Dorsolateral prefrontal cortex (tissue), 120 donors: ENCODE measurements at regions of chr2 and their contacts with region 1.

Region 1: DNA sequence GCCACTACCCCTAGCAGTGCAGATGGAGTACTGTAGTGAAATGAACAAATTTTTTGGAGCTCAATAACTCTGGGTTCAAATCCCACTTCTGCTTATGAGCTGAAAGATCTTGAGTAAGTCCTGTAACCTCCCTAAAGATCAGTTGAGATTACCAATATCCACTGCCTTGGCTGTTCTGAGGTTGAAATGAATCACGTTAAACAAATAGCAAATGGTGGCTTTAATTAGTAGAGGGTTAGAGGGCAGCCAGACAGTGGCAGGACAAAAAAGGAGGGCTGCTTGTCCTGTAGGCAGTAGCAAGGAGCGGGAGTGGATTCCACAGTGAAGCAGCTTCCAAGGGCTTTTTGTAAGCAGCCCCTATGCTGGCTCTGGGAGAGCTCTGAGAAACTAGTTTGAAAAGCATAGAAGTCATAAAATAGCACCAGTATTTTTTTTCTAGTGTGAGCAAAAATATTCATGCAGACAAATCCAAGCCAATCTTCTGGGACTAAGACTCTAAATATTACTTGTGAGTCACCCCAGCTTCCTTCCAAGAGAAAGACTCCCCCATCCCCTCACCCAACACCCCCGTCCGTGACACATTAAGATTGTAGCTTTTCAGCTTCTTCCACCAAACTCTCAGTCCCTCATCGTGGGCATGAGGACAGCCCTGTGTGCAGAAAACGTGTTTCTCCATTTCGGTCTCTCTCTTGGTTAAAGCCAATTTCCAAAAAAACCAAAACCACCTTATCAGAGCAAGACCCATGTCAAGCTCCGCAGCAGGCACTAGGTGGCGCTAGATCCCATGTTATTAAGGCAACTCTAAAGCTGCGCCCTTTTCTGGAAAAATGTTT is 123.5 kb upstream of the LGALSL start:
- DNase-seq: peak; percentile 66 to 91 (median 80)
- H3K4me3 ChIP-seq: peak overlapping the region in 30 of 59 donors; percentile 6 to 48 (median 24)
- H3K27ac ChIP-seq: peak overlapping the region in 52 of 59 donors; percentile 2 to 82 (median 63)
- H3K27me3 ChIP-seq: no peaks in the 10 kb centered on the region
- CTCF ChIP-seq: peak; percentile 81 to 98 (median 94)

Region 2: DNA sequence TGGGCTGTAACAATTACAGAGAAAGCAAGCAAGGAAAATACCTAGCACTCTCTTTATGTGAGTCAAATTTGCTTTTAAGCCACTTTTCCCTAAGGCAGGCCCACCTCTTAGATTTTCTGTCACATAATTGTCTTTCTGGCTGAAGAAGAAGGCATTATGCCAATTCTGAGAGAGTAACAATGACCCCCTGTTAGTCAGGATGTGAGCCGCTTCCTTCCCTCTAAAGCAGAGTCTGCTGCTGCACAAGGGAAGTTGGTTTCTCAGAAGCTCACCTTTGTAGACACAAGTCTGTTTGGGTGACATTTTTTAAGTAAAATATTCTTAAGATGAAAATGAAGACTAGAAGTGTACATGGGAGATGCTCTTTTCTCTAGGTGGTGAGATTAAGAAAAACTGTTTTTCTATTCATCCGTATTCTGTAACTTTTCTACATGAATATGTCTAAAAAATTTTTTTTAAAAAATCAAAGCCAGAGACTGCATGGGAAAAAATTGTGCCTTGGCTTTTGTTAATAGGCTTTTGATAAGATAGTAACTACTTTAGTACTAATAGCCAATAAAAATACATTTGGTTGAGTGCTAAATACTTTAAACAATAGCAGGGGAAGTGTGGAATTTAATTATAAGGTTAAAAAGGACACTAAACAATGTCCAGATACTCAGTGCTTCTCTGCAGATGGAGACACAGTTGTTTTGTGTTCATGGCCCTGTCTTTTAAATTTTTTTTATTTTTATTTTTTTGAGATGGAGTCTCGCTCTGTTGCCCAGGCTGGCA is 277.8 kb before region 1 on chr2:
- intact Hi-C with region 1: loop called (anchors 1 to 2 kb)
- DNase-seq: no peak
- H3K4me3 ChIP-seq: no peak overlapping the region
- H3K27ac ChIP-seq: peak overlapping the region in 8 of 59 donors; percentile 5 to 47 (median 19)
- H3K27me3 ChIP-seq: no peaks in the 10 kb centered on the region
- CTCF ChIP-seq: no peak

Region 3: DNA sequence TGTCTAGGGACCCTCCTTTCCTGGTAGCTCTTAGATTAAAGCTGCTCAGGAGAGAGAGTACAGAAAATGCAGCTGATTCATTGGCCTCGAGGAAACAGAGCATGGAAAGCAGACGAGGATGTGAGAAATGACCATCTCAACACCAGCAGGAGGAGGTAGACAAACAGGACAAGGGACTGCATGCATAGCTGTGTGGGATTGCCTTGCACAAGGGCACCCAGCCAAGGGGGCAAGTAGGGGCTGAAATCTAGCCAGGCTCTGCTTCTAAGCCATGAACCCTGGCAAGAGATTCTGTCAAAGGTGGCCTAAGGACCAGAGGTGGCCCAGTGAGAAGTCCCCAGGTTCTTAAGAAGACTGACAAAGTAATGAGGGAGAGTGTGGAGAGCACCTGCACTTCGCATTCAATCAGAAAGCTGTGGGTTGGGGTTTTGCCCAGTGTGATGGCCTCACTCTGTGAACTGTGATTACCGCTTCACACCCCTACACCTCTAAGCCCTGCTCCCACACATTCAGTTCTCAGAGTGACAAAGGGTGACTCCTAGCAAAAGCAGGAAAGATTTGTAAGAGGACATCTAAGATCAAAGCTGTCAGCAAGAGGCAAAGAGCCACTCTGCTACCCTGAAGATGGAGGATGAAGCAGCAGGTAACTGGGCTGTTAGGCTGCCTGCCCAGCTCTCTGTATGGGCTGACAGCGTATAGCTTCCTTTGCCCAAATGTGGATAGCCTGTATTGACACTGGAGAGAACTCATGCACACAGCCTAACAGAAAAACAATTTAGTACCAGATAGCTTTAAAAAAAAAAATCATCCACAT is 35.0 kb before region 1 on chr2:
- intact Hi-C with region 1: loop called in 1 of 2 experiments (anchors 1 kb)
- DNase-seq: peak in 1 of 10 donors; percentile 45
- H3K4me3 ChIP-seq: no peak overlapping the region
- H3K27ac ChIP-seq: peak overlapping the region in 50 of 59 donors; percentile 9 to 83 (median 64)
- H3K27me3 ChIP-seq: no peaks in the 10 kb centered on the region
- CTCF ChIP-seq: no peak

Region 4: GRCh38 chr2:64523666-64524603 is 193.4 kb after region 1 on chr2 and contains the start of gene AFTPH:
- intact Hi-C with region 1: loop called in 1 of 2 experiments (anchors 1 kb)
- DNase-seq: peak; percentile 97 to 99 (median 98)
- H3K4me3 ChIP-seq: peak within 1 kb of the TSS; percentile 64 to 99 (median 92)
- H3K27ac ChIP-seq: peak within 1 kb of the TSS; percentile 79 to 98 (median 94)
- H3K27me3 ChIP-seq: no peaks in the 10 kb centered on the region
- CTCF ChIP-seq: peak in 42 of 56 donors; percentile 5 to 61 (median 30)
- total RNA-seq, gene AFTPH: 26.7 to 61.2 (median 44.9) TPM

Region 5: GRCh38 chr2:64865073-64865830 is 534.8 kb after region 1 on chr2:
- intact Hi-C with region 1: loop called (anchors 5 kb)
- DNase-seq: peak in 9 of 10 donors; percentile 51 to 77 (median 64)
- H3K4me3 ChIP-seq: peak overlapping the region; percentile 49 to 89 (median 79)
- H3K27ac ChIP-seq: peak overlapping the region; percentile 4 to 98 (median 91)
- H3K27me3 ChIP-seq: no peaks in the 10 kb centered on the region
- CTCF ChIP-seq: peak in 55 of 56 donors; percentile 20 to 100 (median 74)